Pancreas (tissue), 10 donors: ENCODE measurements at regions of chr18 and their contacts with region 1.

Region 1: DNA sequence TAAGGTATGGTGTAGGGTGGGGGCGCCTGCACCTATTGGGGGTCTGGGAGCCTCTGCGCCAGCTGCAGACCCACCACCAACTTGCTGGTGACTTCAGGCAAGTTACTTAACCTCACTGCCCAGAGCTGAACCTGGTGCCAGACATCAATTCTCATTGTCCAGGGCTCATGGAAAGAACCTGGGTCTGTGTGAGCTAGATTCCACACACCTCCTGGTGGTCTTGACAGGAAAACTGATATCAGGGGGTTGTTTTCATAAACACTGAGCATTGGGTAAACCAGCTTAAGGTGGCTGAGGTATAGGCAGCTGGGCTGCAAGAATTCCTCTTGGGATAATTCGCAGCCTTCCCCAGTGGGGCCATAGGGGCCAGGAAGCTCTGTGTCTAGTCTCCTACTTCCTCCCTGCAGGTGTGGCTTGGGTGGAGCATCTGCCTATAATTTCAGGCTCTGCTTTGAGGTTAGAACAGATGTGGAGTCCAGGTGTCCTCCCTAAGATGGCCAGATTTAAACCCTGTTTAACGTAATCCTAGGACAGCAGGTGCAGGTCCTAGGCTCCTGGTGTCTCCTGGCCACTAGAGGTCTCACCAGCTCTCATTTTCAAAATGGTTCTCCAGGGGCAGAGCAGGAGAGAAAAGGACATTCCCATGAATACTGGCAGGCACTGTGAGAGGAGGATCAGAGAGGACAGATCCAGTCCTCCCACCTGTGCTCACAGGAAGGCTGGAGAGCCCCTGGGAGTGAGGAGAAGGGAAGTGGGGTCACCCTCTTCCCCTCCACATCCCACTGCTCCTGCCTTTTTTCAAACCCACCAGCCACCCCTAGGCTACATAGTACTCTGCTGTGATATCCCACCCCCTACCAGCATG is 100.4 kb upstream of the SMAD2 start:
- DNase-seq: peak in 4 of 6 donors; percentile 23 to 75 (median 52)
- ATAC-seq: peak; percentile 81 to 95 (median 90)
- H3K4me3 ChIP-seq: no peak overlapping the region
- H3K27ac ChIP-seq: no peak overlapping the region
- H3K4me1 ChIP-seq: no peaks in the 10 kb centered on the region
- H3K27me3 ChIP-seq: no peaks in the 10 kb centered on the region
- CTCF ChIP-seq: peak; percentile 32 to 65 (median 56)

Region 2: GRCh38 chr18:48085781-48086487 is 55.1 kb after region 1 on chr18:
- intact Hi-C with region 1: no loop called
- DNase-seq: no peak
- ATAC-seq: no peak
- H3K4me3 ChIP-seq: no peak overlapping the region
- H3K27ac ChIP-seq: no peak overlapping the region
- H3K4me1 ChIP-seq: no peaks in the 10 kb centered on the region
- H3K27me3 ChIP-seq: no peaks in the 10 kb centered on the region
- CTCF ChIP-seq: no peak

Region 3: GRCh38 chr18:48345596-48345995 is 314.7 kb after region 1 on chr18:
- intact Hi-C with region 1: loop called in 1 of 3 experiments (anchors 10 kb)
- DNase-seq: peak in 1 of 6 donors; percentile 16
- ATAC-seq: peak in 3 of 4 donors; percentile 44 to 63 (median 49)
- H3K4me3 ChIP-seq: no peak overlapping the region
- H3K27ac ChIP-seq: no peak overlapping the region
- H3K4me1 ChIP-seq: no peaks in the 10 kb centered on the region
- H3K27me3 ChIP-seq: no peaks in the 10 kb centered on the region
- CTCF ChIP-seq: no peak

Region 4: DNA sequence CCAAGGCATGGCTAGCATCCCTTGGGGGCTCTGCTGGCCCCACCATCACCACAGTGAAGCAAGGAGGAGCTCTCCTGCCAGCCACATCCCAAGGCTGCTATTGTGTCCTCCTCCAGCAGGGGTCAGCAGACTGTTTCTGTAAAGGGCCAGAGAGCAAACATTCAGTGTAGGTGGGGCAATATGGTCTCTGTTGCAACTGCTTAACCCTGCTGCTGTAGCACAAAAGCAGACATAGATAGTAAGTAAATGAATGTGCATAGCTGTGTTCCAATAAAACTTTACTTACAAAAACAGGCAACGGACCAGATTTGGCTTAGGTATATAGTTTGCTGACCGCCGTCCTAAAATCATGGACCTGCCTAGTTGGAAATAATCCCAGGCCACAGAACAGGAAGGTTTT is 414.7 kb after region 1 on chr18:
- intact Hi-C with region 1: loop called in 2 of 3 experiments (anchors 5 kb)
- DNase-seq: peak in 5 of 6 donors; percentile 45 to 85 (median 68)
- ATAC-seq: peak; percentile 79 to 95 (median 90)
- H3K4me3 ChIP-seq: no peak overlapping the region
- H3K27ac ChIP-seq: no peak overlapping the region
- H3K4me1 ChIP-seq: peaks cover 0 to 10% (median 0%) of the 10 kb centered on the region in 3 donors
- H3K27me3 ChIP-seq: no peaks in the 10 kb centered on the region
- CTCF ChIP-seq: peak; percentile 55 to 85 (median 74)